ENCODE measurements at regions of chr18 and their contacts with region 1.

Region 1: GRCh38 chr18:50281295-50281971 is at the start of gene MBD1:
- H3K4me3 ChIP-seq: peak within 1 kb of the TSS; percentile 93
- H3K27ac ChIP-seq: peak within 1 kb of the TSS; percentile 74
- H3K4me1 ChIP-seq: peaks cover 6% of the 10 kb centered on the region; the same call in 1 of the 2 replicates
- CTCF ChIP-seq: peak; percentile 93

Region 2: GRCh38 chr18:50266248-50266704 is 15.2 kb before region 1 on chr18 and contains the start of gene CFAP53:
- CTCF ChIA-PET with region 1: interaction called, 10 read pairs
- POLR2A ChIA-PET with region 1: interaction called, 31 read pairs
- H3K4me3 ChIP-seq: peak within 1 kb of the TSS; percentile 75
- H3K27ac ChIP-seq: peak within 1 kb of the TSS; percentile 31; the same call in 1 of the 2 replicates
- H3K4me1 ChIP-seq: no peaks in the 10 kb centered on the region; the same call in 1 of the 2 replicates
- CTCF ChIP-seq: no peak; the same call in 1 of the 2 replicates

Region 3: GRCh38 chr18:50397023-50397422 is 115.6 kb after region 1 on chr18:
- CTCF ChIA-PET with region 1: no interaction called
- POLR2A ChIA-PET with region 1: no interaction called
- H3K4me3 ChIP-seq: no peak overlapping the region
- H3K27ac ChIP-seq: no peak overlapping the region
- H3K4me1 ChIP-seq: peaks cover 3% of the 10 kb centered on the region; the same call in 1 of the 2 replicates
- CTCF ChIP-seq: no peak